ENCODE measurements at regions of chr11 and their contacts with region 1.

Region 1: DNA sequence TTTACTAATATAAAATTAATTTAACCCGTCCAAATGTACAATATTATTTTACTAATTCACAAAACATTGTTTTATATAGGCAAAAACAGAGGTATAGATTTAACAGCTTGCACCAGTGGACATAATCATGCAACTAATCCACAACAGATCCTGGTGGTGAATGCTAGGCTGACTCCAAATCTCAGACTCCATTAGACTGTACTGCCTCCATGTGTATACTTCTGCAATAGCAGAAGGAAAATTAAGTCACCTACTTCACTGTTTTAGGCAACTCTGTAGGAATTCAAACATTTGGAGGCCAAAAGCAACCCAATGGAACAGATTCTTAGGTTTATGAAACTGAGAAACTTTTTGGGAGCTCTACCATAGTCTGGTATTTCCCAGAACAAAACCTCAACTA is 30.0 kb upstream of the RAB39A start:
- DNase-seq: no peak
- ATAC-seq: peak; percentile 66
- H3K4me3 ChIP-seq: no peak overlapping the region
- H3K27ac ChIP-seq: no peak overlapping the region
- H3K4me1 ChIP-seq: no peaks in the 10 kb centered on the region
- H3K27me3 ChIP-seq: no peaks in the 10 kb centered on the region

Region 2: DNA sequence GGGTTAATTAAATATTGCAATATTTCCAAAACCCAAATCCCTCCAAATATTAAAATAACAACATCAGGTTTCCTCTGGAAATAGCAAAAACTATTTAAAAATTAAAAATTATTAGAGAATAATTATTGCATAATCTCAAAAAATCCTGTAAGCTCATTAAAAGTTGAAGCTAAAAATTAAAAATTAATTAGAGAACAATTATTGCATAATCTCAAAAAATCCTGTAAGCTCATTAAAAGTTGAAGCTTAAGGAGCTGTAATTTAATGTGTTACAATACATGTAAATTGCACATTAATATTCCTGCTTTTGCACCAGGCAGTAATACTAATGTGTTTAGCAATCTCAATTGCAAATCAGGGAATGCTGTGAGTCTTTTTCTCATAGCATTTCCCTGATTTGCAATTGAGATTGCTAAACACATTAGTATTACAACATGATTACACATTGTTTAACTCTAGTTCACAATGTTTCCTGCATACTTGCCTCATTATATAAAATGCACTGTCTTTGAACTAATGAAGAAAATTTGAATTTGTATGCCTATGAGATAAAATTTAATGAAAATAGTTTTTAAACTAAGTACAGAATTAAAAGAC is 1127.7 kb before region 1 on chr11:
- intact Hi-C with region 1: no loop called
- DNase-seq: no peak
- ATAC-seq: no peak
- H3K4me3 ChIP-seq: no peak overlapping the region
- H3K27ac ChIP-seq: no peak overlapping the region
- H3K4me1 ChIP-seq: no peaks in the 10 kb centered on the region
- H3K27me3 ChIP-seq: no peaks in the 10 kb centered on the region

Region 3: GRCh38 chr11:107583629-107584195 is 314.6 kb before region 1 on chr11:
- intact Hi-C with region 1: loop called in 1 of 2 experiments (anchors 10 kb)
- DNase-seq: no peak
- ATAC-seq: no peak
- H3K4me3 ChIP-seq: no peak overlapping the region
- H3K27ac ChIP-seq: no peak overlapping the region
- H3K4me1 ChIP-seq: no peaks in the 10 kb centered on the region
- H3K27me3 ChIP-seq: no peaks in the 10 kb centered on the region

Measured in aorta (tissue), 5 donors.